ENCODE measurements at regions of chr10 and their contacts with region 1.

Region 1: DNA sequence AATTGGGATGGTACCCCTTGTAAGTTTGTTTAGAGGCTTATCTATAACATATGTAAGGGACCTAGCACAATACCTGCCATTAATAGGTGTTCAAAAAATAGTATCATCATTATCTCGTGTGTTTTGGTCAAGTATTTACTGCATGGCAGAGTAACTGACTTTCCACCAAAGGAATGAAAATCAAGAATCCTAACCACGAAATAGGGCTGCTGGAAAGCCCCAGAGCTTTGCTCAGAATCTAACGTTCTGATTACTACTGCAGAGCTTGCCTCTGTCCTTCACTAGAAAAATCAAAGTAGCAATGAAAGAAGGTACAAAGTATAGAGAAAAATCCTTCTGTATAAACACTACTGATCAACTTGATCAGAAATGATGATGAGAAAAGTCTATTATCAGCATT is 34.9 kb downstream of the DCLRE1C start:
- DNase-seq: no peak
- H3K4me3 Mint-ChIP-seq: no peak overlapping the region
- H3K27ac Mint-ChIP-seq: no peak overlapping the region
- H3K4me1 Mint-ChIP-seq: peaks cover 20% of the 10 kb centered on the region
- H3K27me3 Mint-ChIP-seq: no peaks in the 10 kb centered on the region

Region 2: DNA sequence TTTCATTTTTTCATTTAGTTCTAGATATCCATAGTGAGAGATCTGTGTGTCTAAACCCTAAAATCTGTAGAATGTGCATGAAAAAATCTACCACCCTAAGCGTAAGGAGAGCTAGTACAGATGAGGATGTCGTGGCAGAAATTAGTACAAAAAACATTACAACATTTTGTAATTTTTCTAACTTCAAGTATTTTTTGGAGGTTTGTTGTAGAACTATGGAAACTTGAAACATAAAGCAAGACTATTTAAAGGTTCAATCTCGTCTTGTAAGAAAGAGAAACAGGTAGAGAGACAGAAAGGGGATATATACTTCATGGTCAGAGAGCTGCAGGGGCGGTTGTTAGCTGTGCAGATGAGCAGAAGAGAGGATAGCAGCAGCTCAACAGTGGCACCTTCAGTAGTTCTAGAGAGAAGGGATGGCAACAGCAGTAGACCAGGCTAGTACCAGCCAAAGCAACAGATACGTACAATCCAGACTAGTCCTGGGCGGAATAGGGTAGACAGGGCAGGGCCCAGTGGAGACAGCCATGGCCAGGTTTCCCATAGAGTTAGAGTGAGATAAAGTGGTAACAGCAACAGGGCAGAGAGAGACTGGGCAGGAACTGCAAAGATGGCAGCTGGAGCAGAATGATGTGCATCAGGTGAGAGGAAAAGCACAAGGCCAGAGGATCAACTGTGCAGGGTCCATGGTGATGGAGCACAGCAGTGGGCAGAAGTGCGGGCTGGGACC is 733.5 kb before region 1 on chr10:
- intact Hi-C with region 1: no loop called
- DNase-seq: peak; percentile 84
- H3K4me3 Mint-ChIP-seq: peak overlapping the region; percentile 62
- H3K27ac Mint-ChIP-seq: peak overlapping the region; percentile 92
- H3K4me1 Mint-ChIP-seq: peaks cover 19% of the 10 kb centered on the region
- H3K27me3 Mint-ChIP-seq: peaks cover 58% of the 10 kb centered on the region

Region 3: DNA sequence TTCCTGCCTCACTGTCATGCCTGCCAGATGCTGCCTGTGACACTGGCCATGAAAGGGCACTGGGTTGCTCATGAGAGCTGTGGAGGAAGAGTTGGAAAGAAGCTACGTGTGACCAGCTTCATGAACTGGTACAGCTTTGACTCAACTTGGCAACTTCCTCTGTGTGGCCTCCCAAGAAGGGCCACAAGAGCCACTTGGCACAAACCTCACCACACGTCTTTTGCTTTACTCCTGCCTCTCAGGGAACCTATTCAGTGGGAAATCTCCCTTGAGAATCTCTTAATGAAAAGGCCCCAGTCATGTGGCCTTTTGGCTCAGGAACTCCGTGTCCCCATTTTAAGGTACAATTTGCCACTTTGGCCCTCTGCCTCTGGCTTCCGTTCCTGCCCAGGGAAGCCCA is 642.8 kb before region 1 on chr10:
- intact Hi-C with region 1: no loop called
- DNase-seq: no peak
- H3K4me3 Mint-ChIP-seq: no peak overlapping the region
- H3K27ac Mint-ChIP-seq: no peak overlapping the region
- H3K4me1 Mint-ChIP-seq: no peaks in the 10 kb centered on the region
- H3K27me3 Mint-ChIP-seq: no peaks in the 10 kb centered on the region

Region 4: DNA sequence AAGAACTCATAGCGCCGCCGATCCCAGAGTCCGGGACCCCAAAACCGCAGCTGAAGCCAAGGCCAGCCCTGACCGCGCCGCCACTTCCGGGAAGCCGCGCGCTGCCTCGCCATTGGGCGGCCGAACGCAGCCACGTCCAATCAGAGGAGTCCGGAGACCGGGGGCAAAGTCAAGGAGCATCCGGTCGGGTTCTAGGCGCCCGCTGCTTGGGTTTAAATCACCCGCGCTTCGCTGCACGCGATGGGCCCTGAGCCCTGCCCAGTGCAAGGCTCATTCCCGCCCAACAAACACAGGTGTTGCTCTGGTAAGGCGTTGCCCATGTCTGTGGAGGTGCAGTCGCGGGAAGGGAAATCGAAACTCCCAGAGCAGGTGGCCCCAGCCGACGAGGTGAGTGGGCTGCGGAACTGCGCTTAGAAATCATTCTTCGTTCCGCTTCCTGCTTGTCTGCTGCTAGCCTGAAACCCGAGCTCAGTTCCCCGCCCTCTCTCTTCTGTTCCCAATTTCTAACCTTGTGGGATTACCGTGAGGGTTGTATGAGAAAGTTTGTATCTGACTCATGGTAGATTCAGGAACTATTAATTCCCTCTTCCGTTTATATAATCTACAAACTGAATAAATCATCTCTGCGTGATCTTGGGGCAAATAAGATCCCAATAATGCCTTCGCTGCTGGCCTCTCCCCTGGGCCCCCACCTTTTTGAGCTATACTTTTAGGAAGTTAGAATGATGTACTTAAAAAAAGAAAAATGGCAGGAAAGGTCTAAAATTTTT is 35.2 kb after region 1 on chr10 and contains the start of gene DCLRE1C:
- intact Hi-C with region 1: loop called (anchors 5 kb)
- DNase-seq: peak; percentile 97
- H3K4me3 Mint-ChIP-seq: peak within 1 kb of the TSS; percentile 96
- H3K27ac Mint-ChIP-seq: peak within 1 kb of the TSS; percentile 97
- H3K4me1 Mint-ChIP-seq: peaks cover 45% of the 10 kb centered on the region
- H3K27me3 Mint-ChIP-seq: no peaks in the 10 kb centered on the region
- total RNA-seq, gene DCLRE1C: 17.5 and 21.0 TPM in 2 replicates